OCI-LY7 (cell line): ENCODE measurements at regions of chr3 and their contacts with region 1.

Region 1: GRCh38 chr3:182713743-182714517 is 79.4 kb upstream of the ATP11B start:
- DNase-seq: peak; percentile 80
- H3K4me3 ChIP-seq: peak overlapping the region; percentile 42
- H3K27ac ChIP-seq: peak overlapping the region; percentile 77
- H3K4me1 ChIP-seq: peaks cover 53% of the 10 kb centered on the region
- CTCF ChIP-seq: peak; percentile 78

Region 2: DNA sequence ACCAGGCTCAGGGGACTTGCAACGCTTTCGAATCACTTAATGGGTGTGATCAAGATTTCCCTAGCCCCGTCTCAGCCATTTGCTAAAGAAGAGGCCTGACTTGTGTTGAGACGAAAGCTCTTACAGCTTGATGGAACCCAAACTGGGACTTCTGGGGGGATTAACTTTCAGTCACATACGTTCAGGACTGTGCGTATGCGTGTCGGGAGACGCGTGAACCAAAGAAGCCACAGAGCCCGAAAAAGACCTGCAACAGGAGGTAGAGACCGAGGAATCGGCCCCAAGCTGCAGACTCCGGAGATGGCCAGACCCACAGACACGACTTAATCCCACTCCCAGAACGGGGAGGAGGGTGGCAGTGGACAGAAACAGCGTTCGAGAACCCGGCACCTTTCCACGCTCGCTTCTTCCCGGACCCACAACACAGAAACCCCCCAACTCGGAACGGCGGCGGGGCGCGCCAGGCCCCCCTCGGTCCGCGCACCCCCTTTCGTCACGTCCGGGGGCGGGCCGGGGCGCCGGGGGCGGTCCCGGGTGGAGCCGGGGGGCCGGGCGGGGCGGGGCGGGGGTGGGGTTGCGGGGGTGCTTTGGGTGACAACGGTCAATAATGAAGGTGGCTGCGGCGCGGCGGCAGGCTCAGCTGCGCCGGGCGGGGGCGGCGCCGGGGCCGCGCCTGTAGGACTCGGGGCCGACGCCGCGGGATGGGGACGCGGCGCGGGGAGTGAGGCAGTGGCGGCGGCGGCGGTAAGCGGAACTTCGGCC is 79.2 kb after region 1 on chr3 and contains the start of gene ATP11B:
- CTCF ChIA-PET with region 1: interaction called, 3 read pairs
- POLR2A ChIA-PET with region 1: interaction called, 10 read pairs
- intact Hi-C with region 1: loop called (anchors 2 kb)
- DNase-seq: peak; percentile 88
- H3K4me3 ChIP-seq: peak within 1 kb of the TSS; percentile 86
- H3K27ac ChIP-seq: peak within 1 kb of the TSS; percentile 72
- H3K4me1 ChIP-seq: peaks cover 37% of the 10 kb centered on the region
- CTCF ChIP-seq: no peak
- total RNA-seq, gene ATP11B: 55.6 and 58.6 TPM in 2 replicates

Region 3: GRCh38 chr3:182837855-182838454 is 124.0 kb after region 1 on chr3:
- CTCF ChIA-PET with region 1: no interaction called
- POLR2A ChIA-PET with region 1: interaction called, 4 read pairs
- intact Hi-C with region 1: loop called (anchors 1 kb)
- DNase-seq: peak; percentile 33
- H3K4me3 ChIP-seq: no peak overlapping the region
- H3K27ac ChIP-seq: no peak overlapping the region
- H3K4me1 ChIP-seq: no peaks in the 10 kb centered on the region
- CTCF ChIP-seq: peak; percentile 77

Region 4: GRCh38 chr3:182904164-182904563 is 190.2 kb after region 1 on chr3:
- CTCF ChIA-PET with region 1: no interaction called
- POLR2A ChIA-PET with region 1: interaction called, 6 read pairs
- intact Hi-C with region 1: loop called (anchors 2 kb)
- DNase-seq: no peak
- H3K4me3 ChIP-seq: no peak overlapping the region
- H3K27ac ChIP-seq: no peak overlapping the region
- H3K4me1 ChIP-seq: peaks cover 22% of the 10 kb centered on the region
- CTCF ChIP-seq: no peak; the same call in 1 of the 2 replicates

Region 5: GRCh38 chr3:182979674-182980191 is 265.8 kb after region 1 on chr3:
- CTCF ChIA-PET with region 1: no interaction called
- POLR2A ChIA-PET with region 1: no interaction called
- intact Hi-C with region 1: loop called (anchors 10 kb)
- DNase-seq: peak; percentile 52
- H3K4me3 ChIP-seq: peak overlapping the region; percentile 91
- H3K27ac ChIP-seq: peak overlapping the region; percentile 50
- H3K4me1 ChIP-seq: peaks cover 37% of the 10 kb centered on the region
- CTCF ChIP-seq: no peak

Region 6: DNA sequence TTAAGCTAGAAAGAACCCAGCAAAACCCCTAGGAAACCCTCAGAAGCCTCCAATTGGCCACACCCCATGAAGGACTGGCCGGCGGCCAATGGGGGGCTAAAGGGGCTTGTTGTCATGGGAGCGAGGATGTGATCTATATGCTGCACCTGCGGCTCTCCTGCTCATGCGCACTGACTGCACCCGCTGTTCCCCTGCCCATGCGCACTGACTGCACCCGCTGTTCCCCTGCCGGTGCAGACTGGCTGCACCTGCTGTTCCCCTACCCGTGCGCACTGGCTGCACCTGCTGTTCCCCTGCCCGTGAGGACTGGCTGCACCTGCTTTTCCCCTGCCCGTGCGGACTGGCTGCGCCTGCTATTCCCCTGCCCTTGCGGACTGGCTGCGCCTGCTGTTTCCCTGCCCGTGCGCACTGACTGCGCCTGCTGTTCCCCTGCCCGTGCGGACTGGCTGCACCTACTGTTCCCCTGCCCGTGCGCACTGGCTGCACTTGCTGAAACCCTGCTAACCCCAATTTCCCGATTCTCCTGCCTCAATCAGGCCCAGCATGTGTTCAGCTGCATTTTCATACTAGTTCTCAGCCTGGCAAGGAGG is 402.2 kb after region 1 on chr3:
- CTCF ChIA-PET with region 1: no interaction called
- POLR2A ChIA-PET with region 1: interaction called, 5 read pairs
- intact Hi-C with region 1: loop called (anchors 1 kb)
- DNase-seq: peak; percentile 99
- H3K4me3 ChIP-seq: peak overlapping the region; percentile 56
- H3K27ac ChIP-seq: peak overlapping the region; percentile 67
- H3K4me1 ChIP-seq: peaks cover 32% of the 10 kb centered on the region
- CTCF ChIP-seq: no peak

Region 7: GRCh38 chr3:183385698-183386613 is 672.0 kb after region 1 on chr3:
- CTCF ChIA-PET with region 1: no interaction called
- POLR2A ChIA-PET with region 1: no interaction called
- intact Hi-C with region 1: loop called (anchors 5 kb)
- DNase-seq: peak; percentile 79
- H3K4me3 ChIP-seq: no peak overlapping the region
- H3K27ac ChIP-seq: no peak overlapping the region
- H3K4me1 ChIP-seq: peaks cover 14% of the 10 kb centered on the region
- CTCF ChIP-seq: peak; percentile 93